Posterior cingulate gyrus (tissue), 11 donors: ENCODE measurements at regions of chr6 and their contacts with region 1.

Region 1: DNA sequence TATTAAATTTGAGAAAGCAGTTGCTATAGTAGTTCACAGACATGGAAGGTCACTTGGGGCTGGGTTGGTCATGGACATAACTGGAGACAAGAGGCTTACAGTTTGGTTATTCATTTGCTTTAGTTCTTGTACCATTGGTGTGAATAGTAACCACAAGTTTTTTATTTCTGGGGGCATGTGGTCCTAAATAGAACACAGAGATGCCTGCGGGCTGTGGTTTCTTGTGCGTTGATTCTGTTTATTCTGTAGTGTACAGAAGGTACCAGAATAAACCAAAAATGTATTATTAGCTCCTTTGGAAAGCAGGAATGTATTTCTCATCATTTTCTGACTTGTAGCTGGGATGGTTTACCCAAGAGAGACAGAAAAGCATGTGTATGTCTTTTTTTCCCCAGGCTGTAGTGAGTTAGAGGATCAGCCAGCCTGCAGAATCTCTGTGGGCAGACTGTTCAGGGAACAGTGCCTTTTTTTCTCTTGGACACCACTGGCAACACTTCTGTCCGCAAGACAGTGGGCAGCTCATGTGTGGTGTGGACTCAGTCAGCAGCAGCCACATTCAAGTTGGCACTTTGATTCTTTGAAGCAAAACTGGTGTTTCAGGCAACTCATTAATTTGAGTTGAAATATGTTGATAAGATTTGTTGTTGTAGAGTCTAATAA is 122.1 kb downstream of the LRRC1 start:
- DNase-seq: peak in 2 of 10 donors; percentile 17 to 38

Region 2: GRCh38 chr6:53410508-53411258 is 506.3 kb before region 1 on chr6:
- intact Hi-C with region 1: no loop called
- DNase-seq: peak in 6 of 10 donors; percentile 9 to 87 (median 44)

Region 3: GRCh38 chr6:53846250-53846649 is 70.7 kb before region 1 on chr6:
- intact Hi-C with region 1: loop called (anchors 5 kb)
- DNase-seq: peak in 2 of 10 donors; percentile 36 to 84